ENCODE measurements at regions of chr19 and their contacts with region 1.

Region 1: DNA sequence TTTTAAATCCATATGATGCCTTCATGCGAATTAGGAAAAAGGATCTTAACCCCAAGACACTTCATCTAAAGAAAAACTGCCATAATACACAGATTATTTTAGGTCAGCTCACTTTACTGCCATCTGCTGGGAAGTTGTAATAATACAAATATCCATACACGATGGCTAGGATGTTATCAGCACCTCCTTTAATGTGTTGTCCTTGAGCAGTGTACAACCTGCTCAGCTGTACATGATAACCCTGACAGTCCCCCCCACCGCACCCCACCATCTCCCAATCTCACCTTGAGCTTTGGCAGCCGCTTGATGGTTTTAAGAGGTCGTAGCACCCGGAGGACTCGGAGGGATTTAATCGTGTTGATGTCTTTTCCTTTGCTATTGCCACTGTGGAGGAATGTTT is 112.2 kb downstream of the IER2 start:
- DNase-seq: no peak
- H3K4me3 ChIP-seq: no peak overlapping the region
- H3K27ac ChIP-seq: no peak overlapping the region
- H3K4me1 ChIP-seq: peaks cover 4% of the 10 kb centered on the region
- H3K27me3 ChIP-seq: no peaks in the 10 kb centered on the region
- CTCF ChIP-seq: peak; percentile 71

Region 2: DNA sequence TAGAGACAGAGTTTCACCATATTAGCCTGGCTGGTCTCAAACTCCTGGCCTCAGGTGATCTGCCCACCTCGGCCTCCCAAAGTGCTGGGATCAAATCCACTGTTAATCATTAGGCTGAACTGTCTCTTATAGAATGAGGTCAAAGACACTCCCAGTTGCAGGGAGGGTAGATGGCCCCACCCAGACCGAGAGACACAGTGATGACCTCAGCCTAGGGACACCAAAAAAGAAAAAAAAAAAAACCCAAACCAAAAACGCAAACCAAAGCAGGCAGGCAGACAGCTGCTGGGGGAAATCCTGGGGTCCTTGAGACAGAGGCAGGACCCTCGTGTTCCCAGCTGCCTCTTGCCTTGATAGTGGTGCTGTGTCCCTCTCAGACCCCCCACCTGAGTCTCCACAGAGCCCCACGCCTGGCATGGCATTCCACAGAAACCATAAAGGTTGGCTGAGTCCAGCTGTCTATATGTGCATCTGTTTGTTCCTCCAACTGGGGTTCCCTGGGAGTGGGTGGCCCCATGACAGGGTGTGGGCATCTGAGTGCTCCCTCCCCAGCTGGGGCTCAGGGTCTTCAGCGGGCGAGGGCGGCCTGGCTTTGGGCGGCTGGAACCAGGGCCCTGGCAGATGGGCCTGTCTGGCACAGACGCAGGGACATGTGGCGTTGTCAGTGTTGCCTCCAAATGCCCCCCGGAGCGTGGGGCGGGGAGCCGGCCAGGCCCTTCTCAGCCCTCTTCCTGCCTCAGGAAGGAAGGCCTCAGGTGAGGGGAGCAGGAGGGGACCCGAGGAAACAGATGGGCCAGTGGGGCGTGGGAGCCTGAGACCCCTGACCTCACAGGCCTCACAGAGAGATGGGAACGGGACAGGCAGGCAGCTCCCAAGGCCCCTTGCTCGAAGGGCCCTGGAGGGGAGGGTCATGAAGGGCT is 287.9 kb before region 1 on chr19:
- intact Hi-C with region 1: loop called (anchors 10 kb)
- DNase-seq: no peak
- H3K4me3 ChIP-seq: no peak overlapping the region
- H3K27ac ChIP-seq: no peak overlapping the region
- H3K4me1 ChIP-seq: peaks cover 9% of the 10 kb centered on the region
- H3K27me3 ChIP-seq: no peaks in the 10 kb centered on the region
- CTCF ChIP-seq: no peak

Measured in left ventricle myocardium inferior (tissue), 1 donor.